CD4-positive, alpha-beta T cell (primary cell): ENCODE measurements at regions of chr4 and their contacts with region 1.

Region 1: GRCh38 chr4:86924811-86925210 is 10.0 kb upstream of the AFF1 start:
- DNase-seq: no peak
- ATAC-seq: no peak
- H3K4me3 ChIP-seq: no peak overlapping the region
- H3K4me3 Mint-ChIP-seq: no peak overlapping the region
- H3K27ac ChIP-seq: no peak overlapping the region
- H3K27ac Mint-ChIP-seq: no peak overlapping the region
- H3K4me1 ChIP-seq: peaks cover 2% of the 10 kb centered on the region
- H3K4me1 Mint-ChIP-seq: peaks cover 4% of the 10 kb centered on the region
- H3K27me3 ChIP-seq: no peaks in the 10 kb centered on the region
- H3K27me3 Mint-ChIP-seq: no peaks in the 10 kb centered on the region
- CTCF ChIP-seq: no peak

Region 2: GRCh38 chr4:86818841-86819240 is 106.0 kb before region 1 on chr4:
- CTCF ChIA-PET with region 1: no interaction called
- POLR2A ChIA-PET with region 1: no interaction called
- intact Hi-C with region 1: no loop called
- DNase-seq: no peak
- ATAC-seq: no peak
- H3K4me3 ChIP-seq: no peak overlapping the region
- H3K4me3 Mint-ChIP-seq: no peak overlapping the region
- H3K27ac ChIP-seq: no peak overlapping the region
- H3K27ac Mint-ChIP-seq: no peak overlapping the region
- H3K4me1 ChIP-seq: no peaks in the 10 kb centered on the region
- H3K4me1 Mint-ChIP-seq: no peaks in the 10 kb centered on the region
- H3K27me3 ChIP-seq: no peaks in the 10 kb centered on the region
- H3K27me3 Mint-ChIP-seq: no peaks in the 10 kb centered on the region
- CTCF ChIP-seq: no peak

Region 3: DNA sequence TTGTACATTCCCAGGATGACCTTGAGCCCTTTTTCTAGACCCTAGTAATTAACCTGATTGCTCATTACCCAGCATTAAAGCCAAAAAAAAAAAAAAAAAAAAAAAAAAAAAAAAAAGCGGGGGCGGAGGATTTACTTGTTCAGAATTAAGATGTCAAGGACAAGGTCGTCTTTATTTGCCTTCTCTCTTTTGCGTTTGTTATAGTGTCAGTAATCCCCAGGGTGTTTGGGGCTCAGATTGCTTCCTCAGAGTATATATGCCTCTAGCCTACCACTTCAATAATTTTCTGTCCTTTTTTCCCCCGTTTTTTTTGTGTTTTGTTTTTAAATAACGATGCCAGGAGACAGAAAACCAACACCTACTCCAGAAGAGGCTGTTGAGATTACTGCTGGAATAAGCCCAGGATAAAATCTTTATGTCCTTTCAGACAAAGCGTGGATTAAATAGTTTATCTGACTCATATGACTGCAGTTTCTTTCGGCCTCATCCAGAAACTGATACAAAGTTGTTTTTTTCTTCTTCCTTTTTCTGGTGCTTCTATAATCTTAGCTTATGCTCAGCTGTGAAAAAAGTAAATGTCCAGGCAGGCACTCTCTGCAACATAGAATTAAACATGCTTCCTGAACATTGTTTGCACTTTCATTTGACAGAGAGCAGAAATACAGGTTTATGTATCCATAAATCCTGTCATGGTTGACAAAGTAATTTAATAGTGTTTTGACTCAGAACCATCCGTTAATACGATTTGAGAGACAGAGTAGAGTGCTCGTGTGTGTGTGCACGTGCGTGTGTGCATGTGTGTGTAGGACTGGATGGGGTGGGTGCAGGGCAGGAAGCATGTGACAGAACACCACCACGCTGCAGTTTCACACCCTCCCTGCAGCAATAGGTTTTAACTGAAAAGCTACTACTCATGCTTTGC is 148.6 kb after region 1 on chr4:
- CTCF ChIA-PET with region 1: interaction called, 13 read pairs
- POLR2A ChIA-PET with region 1: no interaction called
- intact Hi-C with region 1: no loop called
- DNase-seq: peak; percentile 16 to 71 (median 42)
- ATAC-seq: peak; percentile 94
- H3K4me3 ChIP-seq: peak overlapping the region; percentile 23
- H3K4me3 Mint-ChIP-seq: peak overlapping the region; percentile 63
- H3K27ac ChIP-seq: peak overlapping the region in 1 of 2 donors; percentile 2
- H3K27ac Mint-ChIP-seq: peak overlapping the region; percentile 11
- H3K4me1 ChIP-seq: peaks cover 6% of the 10 kb centered on the region
- H3K4me1 Mint-ChIP-seq: peaks cover 70% of the 10 kb centered on the region
- H3K27me3 ChIP-seq: no peaks in the 10 kb centered on the region
- H3K27me3 Mint-ChIP-seq: no peaks in the 10 kb centered on the region
- CTCF ChIP-seq: no peak

Region 4: DNA sequence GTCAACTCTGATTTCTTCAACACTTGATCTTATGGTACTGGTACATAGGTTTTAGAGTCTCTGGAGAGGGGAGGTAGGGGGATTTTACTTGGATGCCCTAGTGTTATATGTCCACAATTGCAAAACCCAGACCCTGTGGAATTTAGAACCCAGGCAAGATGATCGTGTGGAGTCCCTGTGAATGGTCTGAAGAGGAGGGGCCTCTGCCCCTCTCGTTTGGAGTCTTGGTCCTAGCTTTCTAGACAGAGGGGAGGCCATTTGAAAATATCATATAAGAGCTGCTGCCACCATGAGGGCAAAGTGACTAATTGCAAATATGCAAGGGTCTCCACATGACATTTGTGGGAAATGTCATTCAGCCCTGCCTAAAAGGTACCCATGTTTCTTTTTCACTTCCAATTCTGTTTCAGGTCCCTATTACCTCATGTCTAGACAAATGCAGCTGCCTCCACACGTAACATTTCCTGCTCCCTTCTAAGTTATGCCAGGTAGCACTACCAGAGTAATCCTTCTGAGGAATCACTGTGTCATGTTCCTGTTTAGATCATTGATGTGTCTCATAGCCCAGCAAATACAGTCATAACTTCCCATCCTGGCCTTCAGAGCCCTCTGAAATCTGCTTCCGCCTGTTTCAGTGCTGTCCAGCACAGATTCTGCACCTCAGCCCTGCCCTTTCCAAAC is 168.8 kb after region 1 on chr4:
- CTCF ChIA-PET with region 1: interaction called, 112 read pairs
- POLR2A ChIA-PET with region 1: interaction called, 34 read pairs
- intact Hi-C with region 1: loop called (anchors 1 kb)
- DNase-seq: peak in 13 of 14 experiments; percentile 5 to 74 (median 30)
- ATAC-seq: peak; percentile 84
- H3K4me3 ChIP-seq: no peak overlapping the region
- H3K4me3 Mint-ChIP-seq: no peak overlapping the region
- H3K27ac ChIP-seq: no peak overlapping the region
- H3K27ac Mint-ChIP-seq: peak overlapping the region; percentile 74
- H3K4me1 ChIP-seq: peaks cover 5% of the 10 kb centered on the region
- H3K4me1 Mint-ChIP-seq: peaks cover 20% of the 10 kb centered on the region
- H3K27me3 ChIP-seq: no peaks in the 10 kb centered on the region
- H3K27me3 Mint-ChIP-seq: no peaks in the 10 kb centered on the region
- CTCF ChIP-seq: peak; percentile 72

Region 5: GRCh38 chr4:87109121-87109520 is 184.3 kb after region 1 on chr4:
- CTCF ChIA-PET with region 1: interaction called, 15 read pairs
- POLR2A ChIA-PET with region 1: interaction called, 4 read pairs
- intact Hi-C with region 1: no loop called
- DNase-seq: no peak
- ATAC-seq: no peak
- H3K4me3 ChIP-seq: no peak overlapping the region
- H3K4me3 Mint-ChIP-seq: no peak overlapping the region
- H3K27ac ChIP-seq: no peak overlapping the region
- H3K27ac Mint-ChIP-seq: peak overlapping the region; percentile 36
- H3K4me1 ChIP-seq: peaks cover 12% of the 10 kb centered on the region
- H3K4me1 Mint-ChIP-seq: peaks cover 36% of the 10 kb centered on the region
- H3K27me3 ChIP-seq: no peaks in the 10 kb centered on the region
- H3K27me3 Mint-ChIP-seq: no peaks in the 10 kb centered on the region
- CTCF ChIP-seq: no peak

Region 6: DNA sequence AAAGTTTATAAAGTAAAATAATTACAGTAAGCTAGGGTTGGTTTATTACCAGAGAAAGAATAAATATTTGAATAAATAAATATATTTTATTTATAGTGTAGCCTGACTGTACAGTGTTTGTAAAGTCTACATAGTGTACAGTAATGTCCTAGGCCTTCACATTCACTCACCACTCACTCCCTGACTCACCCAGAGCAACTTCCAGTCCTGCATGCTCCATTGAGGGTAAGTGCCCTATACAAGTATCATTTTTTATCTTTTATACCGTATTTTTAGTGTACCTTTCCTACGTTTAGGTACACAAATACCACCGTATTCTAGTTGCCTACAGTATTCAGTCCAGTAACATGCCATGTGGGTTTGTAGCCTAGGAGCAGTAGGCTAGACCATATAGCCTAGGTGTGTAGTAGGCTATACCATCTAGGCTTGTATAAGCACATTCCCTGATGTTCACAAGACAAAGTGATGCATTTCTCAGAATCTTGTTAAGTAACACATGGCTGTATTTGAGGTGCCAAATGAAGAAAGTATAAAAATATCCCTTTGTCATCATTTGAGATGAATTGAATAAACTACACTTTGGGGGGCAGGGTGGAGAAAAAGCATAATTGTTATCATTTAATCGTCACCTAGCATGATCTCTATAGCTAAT is 310.3 kb after region 1 on chr4:
- CTCF ChIA-PET with region 1: interaction called, 5 read pairs
- POLR2A ChIA-PET with region 1: interaction called, 4 read pairs
- intact Hi-C with region 1: loop called (anchors 1 to 2 kb)
- DNase-seq: peak in 1 of 14 experiments; percentile 5
- ATAC-seq: no peak
- H3K4me3 ChIP-seq: peak overlapping the region; percentile 38
- H3K4me3 Mint-ChIP-seq: peak overlapping the region; percentile 89
- H3K27ac ChIP-seq: no peak overlapping the region
- H3K27ac Mint-ChIP-seq: peak overlapping the region; percentile 55
- H3K4me1 ChIP-seq: peaks cover 4% of the 10 kb centered on the region
- H3K4me1 Mint-ChIP-seq: peaks cover 7% of the 10 kb centered on the region
- H3K27me3 ChIP-seq: no peaks in the 10 kb centered on the region
- H3K27me3 Mint-ChIP-seq: peaks cover 12% of the 10 kb centered on the region
- CTCF ChIP-seq: no peak